ENCODE measurements at regions of chr1 and their contacts with region 1.

Region 1: GRCh38 chr1:200409761-200410565 is at the start of gene ZNF281:
- DNase-seq: peak; percentile 97
- H3K4me3 Mint-ChIP-seq: peak within 1 kb of the TSS; percentile 87
- H3K27ac Mint-ChIP-seq: peak within 1 kb of the TSS; percentile 88
- H3K4me1 Mint-ChIP-seq: peaks cover 49% of the 10 kb centered on the region
- H3K27me3 Mint-ChIP-seq: no peaks in the 10 kb centered on the region
- total RNA-seq, gene ZNF281: 11.0 to 11.2 TPM

Region 2: GRCh38 chr1:200448034-200448762 is 38.2 kb after region 1 on chr1:
- CTCF ChIA-PET with region 1: no interaction called
- POLR2A ChIA-PET with region 1: no interaction called
- intact Hi-C with region 1: loop called (anchors 1 kb)
- DNase-seq: peak; percentile 24
- H3K4me3 Mint-ChIP-seq: peak overlapping the region; percentile 38
- H3K27ac Mint-ChIP-seq: peak overlapping the region; percentile 87
- H3K4me1 Mint-ChIP-seq: peaks cover 41% of the 10 kb centered on the region
- H3K27me3 Mint-ChIP-seq: no peaks in the 10 kb centered on the region

Measured in activated CD4-positive, alpha-beta memory T cell treated with anti-CD3 and anti-CD28 coated beads for 36 hours (primary cell).